ENCODE measurements at regions of chr1 and their contacts with region 1.

Region 1: GRCh38 chr1:111619635-111620440 is at the start of gene RAP1A:
- DNase-seq: peak; percentile 88 to 91 (median 88)
- H3K4me3 ChIP-seq: peak within 1 kb of the TSS; percentile 79 to 90
- H3K4me3 Mint-ChIP-seq: peak within 1 kb of the TSS; percentile 95 to 100 (median 98)
- H3K27ac ChIP-seq: peak within 1 kb of the TSS; percentile 84
- H3K27ac Mint-ChIP-seq: peak within 1 kb of the TSS; percentile 93 to 98 (median 97)
- H3K4me1 ChIP-seq: peaks cover 81% of the 10 kb centered on the region
- H3K4me1 Mint-ChIP-seq: peaks cover 59 to 83% (median 71%) of the 10 kb centered on the region in 4 donors
- H3K27me3 ChIP-seq: no peaks in the 10 kb centered on the region
- H3K27me3 Mint-ChIP-seq: no peaks in the 10 kb centered on the region
- total RNA-seq, gene RAP1A: 130 to 134 TPM

Region 2: GRCh38 chr1:111448918-111449702 is 170.7 kb before region 1 on chr1 and contains the starts of genes ATP5PB and WDR77:
- CTCF ChIA-PET with region 1: no interaction called
- POLR2A ChIA-PET with region 1: interaction called, 5 read pairs
- intact Hi-C with region 1: loop called (anchors 2 kb)
- DNase-seq: peak; percentile 94 to 97 (median 96)
- H3K4me3 ChIP-seq: peak within 1 kb of the TSS; percentile 78 to 96
- H3K4me3 Mint-ChIP-seq: peak within 1 kb of the TSS; percentile 98 to 100 (median 99)
- H3K27ac ChIP-seq: peak within 1 kb of the TSS; percentile 91
- H3K27ac Mint-ChIP-seq: peak within 1 kb of the TSS; percentile 94 to 100 (median 99)
- H3K4me1 ChIP-seq: peaks cover 77% of the 10 kb centered on the region
- H3K4me1 Mint-ChIP-seq: peaks cover 57 to 87% (median 71%) of the 10 kb centered on the region in 4 donors
- H3K27me3 ChIP-seq: no peaks in the 10 kb centered on the region
- H3K27me3 Mint-ChIP-seq: no peaks in the 10 kb centered on the region
- total RNA-seq, gene ATP5PB: 103 to 112 TPM
- total RNA-seq, gene WDR77: 26.3 to 30.3 TPM

Region 3: GRCh38 chr1:111570781-111571181 is 49.1 kb before region 1 on chr1:
- CTCF ChIA-PET with region 1: interaction called, 6 read pairs
- POLR2A ChIA-PET with region 1: interaction called, 3 read pairs
- intact Hi-C with region 1: loop called (anchors 10 kb)
- DNase-seq: peak; percentile 18 to 47 (median 34)
- H3K4me3 ChIP-seq: no peak overlapping the region
- H3K4me3 Mint-ChIP-seq: peak overlapping the region in 1 of 8 donors; percentile 3
- H3K27ac ChIP-seq: no peak overlapping the region
- H3K27ac Mint-ChIP-seq: no peak overlapping the region
- H3K4me1 ChIP-seq: peaks cover 6% of the 10 kb centered on the region
- H3K4me1 Mint-ChIP-seq: peaks cover 7 to 10% (median 8%) of the 10 kb centered on the region in 4 donors
- H3K27me3 ChIP-seq: no peaks in the 10 kb centered on the region
- H3K27me3 Mint-ChIP-seq: no peaks in the 10 kb centered on the region

Region 4: GRCh38 chr1:111603979-111604378 is 15.9 kb before region 1 on chr1:
- CTCF ChIA-PET with region 1: interaction called, 15 read pairs
- POLR2A ChIA-PET with region 1: interaction called, 244 read pairs
- intact Hi-C with region 1: loop called (anchors 1 kb)
- DNase-seq: peak; percentile 80 to 91 (median 85)
- H3K4me3 ChIP-seq: no peak overlapping the region
- H3K4me3 Mint-ChIP-seq: peak overlapping the region; percentile 26 to 89 (median 72)
- H3K27ac ChIP-seq: peak overlapping the region; percentile 27
- H3K27ac Mint-ChIP-seq: peak overlapping the region; percentile 85 to 97 (median 91)
- H3K4me1 ChIP-seq: peaks cover 78% of the 10 kb centered on the region
- H3K4me1 Mint-ChIP-seq: peaks cover 58 to 80% (median 73%) of the 10 kb centered on the region in 4 donors
- H3K27me3 ChIP-seq: no peaks in the 10 kb centered on the region
- H3K27me3 Mint-ChIP-seq: no peaks in the 10 kb centered on the region

Region 5: DNA sequence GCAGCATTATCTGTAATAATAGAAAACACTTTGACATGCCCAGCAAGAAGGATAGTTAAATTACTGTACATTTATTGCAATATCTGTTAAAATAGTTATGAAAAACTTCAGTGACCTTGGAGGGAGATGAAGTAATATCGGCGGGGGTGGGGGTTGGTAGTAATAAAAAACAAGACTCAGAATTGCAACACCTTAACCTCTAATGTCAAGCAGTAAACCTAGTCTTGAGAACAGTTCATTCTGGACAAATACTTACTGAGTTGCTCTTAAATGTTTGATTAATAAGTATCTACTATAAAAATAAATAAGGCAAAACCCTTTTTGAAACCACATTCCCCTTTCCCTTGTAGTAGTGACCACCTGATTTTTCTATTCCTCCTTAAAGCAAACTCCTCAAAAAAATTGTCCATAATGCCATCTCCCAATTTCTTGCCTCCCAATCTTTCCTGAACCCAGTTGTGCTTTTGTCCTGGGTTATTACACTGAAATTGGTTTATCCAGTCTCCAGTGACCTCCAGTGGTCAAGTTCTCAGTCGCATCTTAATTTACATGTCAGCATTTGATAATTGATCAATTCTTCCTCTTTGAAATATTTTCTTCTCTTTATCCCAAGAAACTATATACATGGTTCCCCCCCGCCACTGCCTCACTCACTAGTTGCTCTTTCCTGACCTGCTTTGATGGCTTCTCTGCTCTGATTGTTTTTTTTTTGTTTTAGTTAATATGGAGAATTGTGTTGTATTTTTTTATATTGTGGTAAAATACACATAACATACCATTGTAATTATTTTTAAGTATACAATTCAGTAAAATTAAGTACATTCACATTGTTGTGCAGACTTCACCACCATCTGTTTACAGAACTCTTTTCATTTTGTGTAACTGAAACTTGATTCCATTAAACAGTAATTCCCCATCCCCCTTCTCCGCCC is 36.5 kb after region 1 on chr1:
- CTCF ChIA-PET with region 1: no interaction called
- POLR2A ChIA-PET with region 1: interaction called, 4 read pairs
- intact Hi-C with region 1: loop called (anchors 5 kb)
- DNase-seq: peak in 4 of 5 donors; percentile 18 to 39 (median 36)
- H3K4me3 ChIP-seq: no peak overlapping the region
- H3K4me3 Mint-ChIP-seq: peak overlapping the region in 4 of 8 donors; percentile 16 to 53 (median 28)
- H3K27ac ChIP-seq: no peak overlapping the region
- H3K27ac Mint-ChIP-seq: peak overlapping the region in 5 of 7 donors; percentile 8 to 57 (median 45)
- H3K4me1 ChIP-seq: peaks cover 84% of the 10 kb centered on the region
- H3K4me1 Mint-ChIP-seq: peaks cover 38 to 51% (median 45%) of the 10 kb centered on the region in 4 donors
- H3K27me3 ChIP-seq: no peaks in the 10 kb centered on the region
- H3K27me3 Mint-ChIP-seq: no peaks in the 10 kb centered on the region

Region 6: GRCh38 chr1:111755331-111756123 is 135.7 kb after region 1 on chr1 and contains the start of gene DDX20:
- CTCF ChIA-PET with region 1: no interaction called
- POLR2A ChIA-PET with region 1: interaction called, 4 read pairs
- intact Hi-C with region 1: loop called (anchors 1 kb)
- DNase-seq: peak; percentile 94 to 96 (median 95)
- H3K4me3 ChIP-seq: peak within 1 kb of the TSS; percentile 63 to 92
- H3K4me3 Mint-ChIP-seq: peak within 1 kb of the TSS; percentile 90 to 100 (median 98)
- H3K27ac ChIP-seq: peak within 1 kb of the TSS; percentile 93
- H3K27ac Mint-ChIP-seq: peak within 1 kb of the TSS; percentile 97 to 100 (median 99)
- H3K4me1 ChIP-seq: peaks cover 20% of the 10 kb centered on the region
- H3K4me1 Mint-ChIP-seq: peaks cover 26 to 36% (median 33%) of the 10 kb centered on the region in 4 donors
- H3K27me3 ChIP-seq: no peaks in the 10 kb centered on the region
- H3K27me3 Mint-ChIP-seq: peaks cover 0 to 2% of the 10 kb centered on the region in 2 donors
- total RNA-seq, gene DDX20: 22.2 to 26.0 TPM